Dendritic cell treated with granulocyte-macrophage colony-stimulating factor and Interleukin-4, amounts not matched to agents 40 ng/mL and 50 ng/mL, for 4 days (primary cell): ENCODE measurements at regions of chr18 and their contacts with region 1.

Region 1: GRCh38 chr18:31555971-31556747 is 35.5 kb upstream of the TTR start:
- H3K4me3 Mint-ChIP-seq: no peak overlapping the region
- H3K27ac Mint-ChIP-seq: no peak overlapping the region
- H3K4me1 Mint-ChIP-seq: no peaks in the 10 kb centered on the region
- H3K27me3 Mint-ChIP-seq: peaks cover 1% of the 10 kb centered on the region

Region 2: DNA sequence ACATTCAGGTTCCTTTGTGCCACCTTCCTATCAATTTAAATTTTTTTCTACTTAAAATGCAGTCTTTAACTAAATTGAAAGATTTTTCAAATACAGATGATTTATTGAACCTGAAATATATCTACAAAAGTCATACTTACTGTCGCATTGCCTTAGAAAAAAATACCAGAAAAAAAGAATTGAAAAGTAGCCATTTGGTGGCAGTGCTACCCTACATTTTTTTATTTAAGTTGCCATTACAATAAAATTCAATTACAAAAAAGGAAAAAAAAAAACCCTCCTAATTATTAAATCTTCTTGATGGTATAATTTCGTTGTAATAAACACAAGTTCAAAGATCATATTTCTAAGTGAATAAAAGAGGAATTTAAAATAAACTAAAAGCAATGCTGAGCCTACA is 557.0 kb before region 1 on chr18:
- intact Hi-C with region 1: loop called (anchors 5 kb)
- H3K4me3 Mint-ChIP-seq: no peak overlapping the region
- H3K27ac Mint-ChIP-seq: no peak overlapping the region
- H3K4me1 Mint-ChIP-seq: no peaks in the 10 kb centered on the region
- H3K27me3 Mint-ChIP-seq: peaks cover 13% of the 10 kb centered on the region

Region 3: GRCh38 chr18:31596081-31596872 is 40.1 kb after region 1 on chr18:
- intact Hi-C with region 1: no loop called
- H3K4me3 Mint-ChIP-seq: no peak overlapping the region
- H3K27ac Mint-ChIP-seq: no peak overlapping the region
- H3K4me1 Mint-ChIP-seq: no peaks in the 10 kb centered on the region
- H3K27me3 Mint-ChIP-seq: no peaks in the 10 kb centered on the region

Region 4: DNA sequence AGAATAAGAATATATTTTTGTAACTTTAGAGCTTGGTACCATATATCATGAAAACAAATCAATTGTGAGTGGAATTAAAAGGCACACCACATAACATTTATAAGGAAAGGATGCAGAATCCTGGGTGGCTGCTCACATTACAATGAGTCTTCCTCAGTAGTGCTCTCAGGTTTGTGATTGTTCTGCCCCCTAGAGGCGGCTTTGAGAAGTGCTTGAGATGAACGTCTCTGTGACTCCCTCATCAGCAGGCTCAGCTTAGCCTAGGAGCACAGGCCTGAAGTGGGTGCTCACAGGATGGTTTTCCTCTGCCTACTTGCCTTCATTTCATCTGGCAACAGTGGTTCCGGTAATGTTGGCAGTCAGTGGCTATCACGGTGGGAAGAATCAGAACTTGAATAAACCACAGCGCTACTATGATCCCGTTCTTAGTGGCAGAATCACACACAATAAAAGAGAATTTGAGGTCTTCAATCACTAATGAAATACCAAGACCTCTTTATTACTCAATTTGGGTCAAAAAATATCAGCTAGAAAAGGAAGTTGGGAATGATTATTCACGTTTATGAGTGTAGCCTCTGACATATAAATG is 166.3 kb after region 1 on chr18:
- intact Hi-C with region 1: loop called (anchors 1 kb)
- H3K4me3 Mint-ChIP-seq: no peak overlapping the region
- H3K27ac Mint-ChIP-seq: no peak overlapping the region
- H3K4me1 Mint-ChIP-seq: peaks cover 16% of the 10 kb centered on the region
- H3K27me3 Mint-ChIP-seq: peaks cover 27% of the 10 kb centered on the region

Region 5: GRCh38 chr18:31741097-31741735 is 185.1 kb after region 1 on chr18:
- intact Hi-C with region 1: no loop called
- H3K4me3 Mint-ChIP-seq: no peak overlapping the region
- H3K27ac Mint-ChIP-seq: no peak overlapping the region
- H3K4me1 Mint-ChIP-seq: no peaks in the 10 kb centered on the region
- H3K27me3 Mint-ChIP-seq: peaks cover 2% of the 10 kb centered on the region

Region 6: DNA sequence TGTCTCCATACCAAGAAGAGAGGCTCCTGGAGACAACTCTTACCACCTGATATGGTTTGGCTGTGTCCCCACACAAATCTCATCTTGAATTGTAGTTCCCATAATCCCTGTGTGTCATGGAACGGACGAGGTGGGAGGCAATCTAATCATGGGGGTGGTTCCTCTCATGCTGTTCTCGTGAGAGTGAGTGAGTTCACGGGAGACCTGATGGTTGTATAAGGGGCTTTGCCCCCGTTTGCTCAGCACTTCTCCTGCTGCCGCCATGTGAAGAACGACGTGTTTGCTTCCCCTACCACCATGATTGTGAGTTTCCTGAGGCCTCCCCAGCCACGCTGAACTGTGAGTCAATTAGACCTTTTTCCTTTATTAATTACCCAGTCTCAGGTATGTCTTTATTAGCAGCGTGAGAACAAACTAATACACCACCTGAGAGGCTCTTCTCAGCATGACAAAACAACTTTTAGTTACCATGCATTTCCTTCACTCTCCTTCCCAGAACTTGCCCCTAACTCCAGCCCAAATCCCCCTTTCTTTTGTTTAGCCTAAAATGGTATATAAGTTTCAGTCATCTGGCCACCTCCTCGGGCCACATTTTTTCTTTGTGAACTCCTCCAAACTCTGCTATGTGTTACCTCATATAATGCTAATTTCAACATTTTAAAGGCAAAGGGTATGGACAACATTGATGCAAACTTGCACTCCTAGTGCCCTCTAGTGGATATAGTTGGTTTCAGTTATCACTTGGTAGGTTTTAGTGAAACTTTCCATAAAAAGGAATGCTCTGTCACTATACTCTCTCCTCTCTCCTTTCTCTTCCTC is 263.2 kb after region 1 on chr18:
- intact Hi-C with region 1: loop called (anchors 1 kb)
- H3K4me3 Mint-ChIP-seq: no peak overlapping the region
- H3K27ac Mint-ChIP-seq: no peak overlapping the region
- H3K4me1 Mint-ChIP-seq: peaks cover 21% of the 10 kb centered on the region
- H3K27me3 Mint-ChIP-seq: peaks cover 2% of the 10 kb centered on the region

Region 7: GRCh38 chr18:31977270-31977872 is 421.2 kb after region 1 on chr18:
- intact Hi-C with region 1: loop called (anchors 10 kb)
- H3K4me3 Mint-ChIP-seq: no peak overlapping the region
- H3K27ac Mint-ChIP-seq: no peak overlapping the region
- H3K4me1 Mint-ChIP-seq: peaks cover 5% of the 10 kb centered on the region
- H3K27me3 Mint-ChIP-seq: no peaks in the 10 kb centered on the region